T-cell (primary cell): ENCODE measurements at regions of chr14 and their contacts with region 1.

Region 1: GRCh38 chr14:24710403-24711112 is 76.6 kb upstream of the GZMB start:
- DNase-seq: peak in 30 of 35 experiments; percentile 10 to 74 (median 37)
- ATAC-seq: peak in 1 of 4 experiments; percentile 35
- H3K4me3 ChIP-seq: no peak overlapping the region
- H3K4me3 Mint-ChIP-seq: no peak overlapping the region
- H3K27ac ChIP-seq: no peak overlapping the region
- H3K27ac Mint-ChIP-seq: no peak overlapping the region
- H3K4me1 ChIP-seq: peaks cover 0 to 7% of the 10 kb centered on the region in 2 experiments
- H3K4me1 Mint-ChIP-seq: peaks cover 0 to 4% (median 0%) of the 10 kb centered on the region in 3 donors
- H3K27me3 ChIP-seq: peaks cover 0 to 3% of the 10 kb centered on the region in 2 experiments
- H3K27me3 Mint-ChIP-seq: peaks cover 7 to 17% of the 10 kb centered on the region in 2 donors

Region 2: GRCh38 chr14:24093901-24094761 is 616.4 kb before region 1 on chr14 and contains the start of gene PCK2:
- CTCF ChIA-PET with region 1: interaction called in 1 of 2 experiments, 11 read pairs
- POLR2A ChIA-PET with region 1: no interaction called
- DNase-seq: peak; percentile 29 to 76 (median 60)
- ATAC-seq: peak; percentile 80 to 82 (median 80)
- H3K4me3 ChIP-seq: peak within 1 kb of the TSS; percentile 79 to 92
- H3K4me3 Mint-ChIP-seq: peak within 1 kb of the TSS; percentile 93 to 97 (median 96)
- H3K27ac ChIP-seq: peak within 1 kb of the TSS; percentile 83
- H3K27ac Mint-ChIP-seq: peak within 1 kb of the TSS; percentile 98
- H3K4me1 ChIP-seq: peaks cover 5 to 26% of the 10 kb centered on the region in 2 experiments
- H3K4me1 Mint-ChIP-seq: peaks cover 28 to 46% (median 39%) of the 10 kb centered on the region in 3 donors
- H3K27me3 ChIP-seq: no peaks in the 10 kb centered on the region
- H3K27me3 Mint-ChIP-seq: no peaks in the 10 kb centered on the region
- total RNA-seq, gene PCK2: 11.8 to 35.5 (median 29.4) TPM

Region 3: DNA sequence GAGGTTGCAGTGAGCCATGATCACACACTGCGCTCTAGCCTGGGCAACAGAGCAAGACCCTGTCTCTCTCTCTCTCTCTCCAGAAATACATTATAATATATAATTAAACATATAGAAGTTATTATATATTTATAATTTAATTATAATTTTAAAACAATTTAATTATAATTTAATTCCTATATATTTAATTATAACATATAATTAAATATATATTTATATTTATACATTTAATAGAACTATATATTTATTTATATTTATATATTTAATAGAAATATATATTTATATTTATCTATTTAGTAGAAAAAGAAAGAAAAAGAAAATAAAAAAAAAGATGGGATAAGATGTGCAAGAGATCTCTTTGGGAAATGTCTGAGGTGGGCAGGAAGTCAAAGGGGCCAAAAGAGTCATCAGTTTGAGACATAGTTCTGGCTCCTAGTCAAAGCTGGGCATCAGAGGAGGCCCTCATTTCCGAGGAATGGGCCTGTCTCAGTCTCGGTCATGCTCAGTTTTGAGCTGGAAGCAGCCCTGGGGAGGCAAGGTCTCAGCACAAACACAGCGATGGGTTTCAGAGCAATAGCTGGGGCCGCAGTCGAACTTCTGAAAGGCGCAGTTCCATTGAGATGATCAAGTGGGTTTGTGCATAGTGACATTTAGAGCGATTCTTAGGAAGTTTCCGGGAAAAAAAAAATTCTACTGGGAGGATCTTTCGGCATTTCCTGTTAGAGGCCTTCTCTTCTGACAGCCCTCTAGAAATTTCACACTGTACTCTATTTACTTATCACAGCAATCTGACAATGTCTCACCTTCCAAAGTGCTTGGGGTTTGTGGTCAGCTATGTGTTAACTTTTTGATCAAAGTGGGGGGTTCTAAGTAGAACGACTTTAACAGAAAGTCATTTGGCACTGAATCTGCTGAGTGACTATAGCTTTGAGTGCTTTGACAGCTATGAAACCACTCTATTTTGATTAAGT is 17.9 kb before region 1 on chr14:
- CTCF ChIA-PET with region 1: interaction called, 7 to 16 read pairs
- POLR2A ChIA-PET with region 1: no interaction called
- DNase-seq: peak in 17 of 35 experiments; percentile 20 to 85 (median 36)
- ATAC-seq: peak; percentile 84 to 94 (median 90)
- H3K4me3 ChIP-seq: peak overlapping the region; percentile 3 to 35
- H3K4me3 Mint-ChIP-seq: peak overlapping the region; percentile 2 to 65 (median 25)
- H3K27ac ChIP-seq: peak overlapping the region; percentile 58
- H3K27ac Mint-ChIP-seq: peak overlapping the region; percentile 56 to 84
- H3K4me1 ChIP-seq: peaks cover 15 to 64% of the 10 kb centered on the region in 2 experiments
- H3K4me1 Mint-ChIP-seq: peaks cover 2 to 22% (median 14%) of the 10 kb centered on the region in 3 donors
- H3K27me3 ChIP-seq: no peaks in the 10 kb centered on the region
- H3K27me3 Mint-ChIP-seq: peaks cover 0 to 10% of the 10 kb centered on the region in 2 donors

Region 4: DNA sequence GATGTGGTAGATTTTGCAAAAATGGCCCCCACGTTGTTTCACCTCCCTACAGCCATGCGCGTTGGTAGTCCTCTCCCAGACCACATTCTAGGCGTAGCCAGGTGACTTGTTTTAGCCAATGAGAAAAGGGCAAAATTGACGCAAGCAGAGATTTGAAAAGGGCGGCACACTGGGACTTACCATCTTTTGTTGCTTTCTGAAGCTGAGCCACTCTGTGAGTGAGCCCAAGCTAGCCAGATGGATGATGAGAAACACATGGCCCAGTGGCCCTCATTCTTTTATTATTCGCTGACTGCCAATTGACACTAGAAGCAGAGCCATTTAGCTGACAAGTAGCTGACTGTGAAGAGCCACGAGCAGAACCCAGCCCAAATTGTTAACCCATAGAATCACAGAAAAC is 65.4 kb after region 1 on chr14:
- CTCF ChIA-PET with region 1: interaction called in 1 of 2 experiments, 11 read pairs
- POLR2A ChIA-PET with region 1: no interaction called
- DNase-seq: no peak
- ATAC-seq: no peak
- H3K4me3 ChIP-seq: no peak overlapping the region
- H3K4me3 Mint-ChIP-seq: no peak overlapping the region
- H3K27ac ChIP-seq: no peak overlapping the region
- H3K27ac Mint-ChIP-seq: no peak overlapping the region
- H3K4me1 ChIP-seq: no peaks in the 10 kb centered on the region
- H3K4me1 Mint-ChIP-seq: no peaks in the 10 kb centered on the region
- H3K27me3 ChIP-seq: no peaks in the 10 kb centered on the region
- H3K27me3 Mint-ChIP-seq: peaks cover 26 to 37% of the 10 kb centered on the region in 2 donors

Region 5: GRCh38 chr14:25132732-25133422 is 422.3 kb after region 1 on chr14:
- CTCF ChIA-PET with region 1: interaction called, 3 to 28 read pairs
- POLR2A ChIA-PET with region 1: no interaction called
- DNase-seq: peak in 29 of 35 experiments; percentile 2 to 68 (median 26)
- ATAC-seq: peak; percentile 69 to 80 (median 75)
- H3K4me3 ChIP-seq: no peak overlapping the region
- H3K4me3 Mint-ChIP-seq: no peak overlapping the region
- H3K27ac ChIP-seq: no peak overlapping the region
- H3K27ac Mint-ChIP-seq: no peak overlapping the region
- H3K4me1 ChIP-seq: peaks cover 0 to 4% of the 10 kb centered on the region in 2 experiments
- H3K4me1 Mint-ChIP-seq: peaks cover 4 to 7% (median 5%) of the 10 kb centered on the region in 3 donors
- H3K27me3 ChIP-seq: peaks cover 7 to 36% of the 10 kb centered on the region in 2 experiments
- H3K27me3 Mint-ChIP-seq: peaks cover 35 to 47% of the 10 kb centered on the region in 2 donors